Endothelial cell of umbilical vein (primary cell): ENCODE measurements at regions of chr2 and their contacts with region 1.

Region 1: GRCh38 chr2:198296665-198297308 is 492.4 kb downstream of the PLCL1 start:
- DNase-seq: peak; percentile 63
- H3K4me3 ChIP-seq: no peak overlapping the region
- H3K27ac ChIP-seq: no peak overlapping the region
- H3K4me1 ChIP-seq: no peaks in the 10 kb centered on the region
- H3K27me3 ChIP-seq: peaks cover 0 to 4% of the 10 kb centered on the region in 2 experiments
- CTCF ChIP-seq: peak; percentile 58 to 73
- POLR2A ChIP-seq: no peak

Region 2: GRCh38 chr2:197434541-197435513 is 862.0 kb before region 1 on chr2 and contains the start of gene SF3B1:
- CTCF ChIA-PET with region 1: no interaction called
- POLR2A ChIA-PET with region 1: no interaction called
- dilution Hi-C with region 1: no loop called
- intact Hi-C with region 1: loop called (anchors 5 kb)
- DNase-seq: peak; percentile 99
- H3K4me3 ChIP-seq: peak within 1 kb of the TSS; percentile 67 to 100 (median 99)
- H3K27ac ChIP-seq: peak within 1 kb of the TSS; percentile 96
- H3K4me1 ChIP-seq: peaks cover 19% of the 10 kb centered on the region
- H3K27me3 ChIP-seq: no peaks in the 10 kb centered on the region
- CTCF ChIP-seq: peak in 1 of 2 donors; percentile 3
- POLR2A ChIP-seq: peak; percentile 95
- total RNA-seq, gene SF3B1: 222 and 234 TPM in 2 replicates

Region 3: GRCh38 chr2:197705121-197705911 is 591.5 kb before region 1 on chr2 and contains the start of gene MARS2:
- CTCF ChIA-PET with region 1: interaction called, 18 read pairs
- POLR2A ChIA-PET with region 1: no interaction called
- dilution Hi-C with region 1: no loop called
- intact Hi-C with region 1: loop called (anchors 1 kb)
- DNase-seq: peak; percentile 93
- H3K4me3 ChIP-seq: peak within 1 kb of the TSS; percentile 54 to 85 (median 81)
- H3K27ac ChIP-seq: peak within 1 kb of the TSS; percentile 34
- H3K4me1 ChIP-seq: peaks cover 22% of the 10 kb centered on the region
- H3K27me3 ChIP-seq: peaks cover 0 to 3% of the 10 kb centered on the region in 2 experiments
- CTCF ChIP-seq: no peak
- POLR2A ChIP-seq: peak; percentile 95
- total RNA-seq, gene MARS2: 5.1 and 5.3 TPM in 2 replicates

Region 4: GRCh38 chr2:197799068-197799467 is 497.7 kb before region 1 on chr2:
- CTCF ChIA-PET with region 1: interaction called, 20 read pairs
- POLR2A ChIA-PET with region 1: no interaction called
- dilution Hi-C with region 1: no loop called
- intact Hi-C with region 1: loop called (anchors 1 kb)
- DNase-seq: no peak
- H3K4me3 ChIP-seq: no peak overlapping the region
- H3K27ac ChIP-seq: no peak overlapping the region
- H3K4me1 ChIP-seq: peaks cover 4% of the 10 kb centered on the region
- H3K27me3 ChIP-seq: peaks cover 2 to 5% of the 10 kb centered on the region in 2 experiments
- CTCF ChIP-seq: no peak
- POLR2A ChIP-seq: no peak

Region 5: DNA sequence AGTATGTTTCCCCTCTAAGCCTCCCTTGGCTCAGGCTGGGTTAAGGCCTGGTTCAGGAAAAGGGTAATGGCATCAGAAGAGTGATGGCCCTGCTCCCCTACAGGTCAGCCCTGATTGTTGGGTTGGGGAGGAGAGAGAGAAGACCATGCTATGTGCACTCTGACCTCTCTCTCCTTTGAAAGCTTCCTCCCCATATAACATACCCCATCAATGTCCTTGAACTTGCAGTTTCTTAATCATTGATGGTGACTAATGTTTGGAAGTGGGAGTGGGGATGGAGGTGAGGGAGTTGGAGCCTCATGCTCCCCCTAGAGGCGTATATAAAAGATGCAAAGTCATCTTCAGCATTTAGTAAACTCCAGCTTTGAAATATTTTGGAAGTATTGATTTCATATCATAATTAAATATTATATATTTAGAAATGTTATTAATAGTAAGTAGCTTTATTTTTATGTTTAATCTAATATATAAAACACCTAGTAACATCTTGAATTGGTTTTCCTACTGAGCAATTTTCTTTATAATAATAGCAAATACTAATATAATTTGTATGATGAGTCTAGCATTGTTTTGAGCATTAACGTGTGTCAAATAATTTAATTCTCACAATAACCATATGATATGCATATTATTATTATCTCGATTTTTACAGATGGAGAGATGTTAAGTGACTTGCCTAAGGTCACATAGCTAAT is 483.5 kb before region 1 on chr2:
- CTCF ChIA-PET with region 1: interaction called, 12 read pairs
- POLR2A ChIA-PET with region 1: no interaction called
- dilution Hi-C with region 1: no loop called
- intact Hi-C with region 1: no loop called
- DNase-seq: peak; percentile 33
- H3K4me3 ChIP-seq: no peak overlapping the region
- H3K27ac ChIP-seq: no peak overlapping the region
- H3K4me1 ChIP-seq: peaks cover 2% of the 10 kb centered on the region
- H3K27me3 ChIP-seq: no peaks in the 10 kb centered on the region
- CTCF ChIP-seq: peak; percentile 30 to 46
- POLR2A ChIP-seq: no peak

Region 6: GRCh38 chr2:198127627-198128026 is 169.2 kb before region 1 on chr2:
- CTCF ChIA-PET with region 1: interaction called, 24 read pairs
- POLR2A ChIA-PET with region 1: no interaction called
- dilution Hi-C with region 1: no loop called
- intact Hi-C with region 1: loop called (anchors 1 kb)
- DNase-seq: peak; percentile 73
- H3K4me3 ChIP-seq: no peak overlapping the region
- H3K27ac ChIP-seq: no peak overlapping the region
- H3K4me1 ChIP-seq: no peaks in the 10 kb centered on the region
- H3K27me3 ChIP-seq: no peaks in the 10 kb centered on the region
- CTCF ChIP-seq: peak; percentile 60 to 61
- POLR2A ChIP-seq: no peak

Region 7: GRCh38 chr2:198405311-198405710 is 108.5 kb after region 1 on chr2:
- CTCF ChIA-PET with region 1: no interaction called
- POLR2A ChIA-PET with region 1: no interaction called
- dilution Hi-C with region 1: no loop called
- intact Hi-C with region 1: no loop called
- DNase-seq: no peak
- H3K4me3 ChIP-seq: no peak overlapping the region
- H3K27ac ChIP-seq: no peak overlapping the region
- H3K4me1 ChIP-seq: no peaks in the 10 kb centered on the region
- H3K27me3 ChIP-seq: no peaks in the 10 kb centered on the region
- CTCF ChIP-seq: no peak
- POLR2A ChIP-seq: no peak

Region 8: GRCh38 chr2:198890490-198890889 is 593.7 kb after region 1 on chr2:
- CTCF ChIA-PET with region 1: no interaction called
- POLR2A ChIA-PET with region 1: no interaction called
- dilution Hi-C with region 1: no loop called
- intact Hi-C with region 1: no loop called
- DNase-seq: no peak
- H3K4me3 ChIP-seq: no peak overlapping the region
- H3K27ac ChIP-seq: no peak overlapping the region
- H3K4me1 ChIP-seq: no peaks in the 10 kb centered on the region
- H3K27me3 ChIP-seq: no peaks in the 10 kb centered on the region
- CTCF ChIP-seq: no peak
- POLR2A ChIP-seq: no peak